ENCODE measurements at regions of chr10 and their contacts with region 1.

Region 1: DNA sequence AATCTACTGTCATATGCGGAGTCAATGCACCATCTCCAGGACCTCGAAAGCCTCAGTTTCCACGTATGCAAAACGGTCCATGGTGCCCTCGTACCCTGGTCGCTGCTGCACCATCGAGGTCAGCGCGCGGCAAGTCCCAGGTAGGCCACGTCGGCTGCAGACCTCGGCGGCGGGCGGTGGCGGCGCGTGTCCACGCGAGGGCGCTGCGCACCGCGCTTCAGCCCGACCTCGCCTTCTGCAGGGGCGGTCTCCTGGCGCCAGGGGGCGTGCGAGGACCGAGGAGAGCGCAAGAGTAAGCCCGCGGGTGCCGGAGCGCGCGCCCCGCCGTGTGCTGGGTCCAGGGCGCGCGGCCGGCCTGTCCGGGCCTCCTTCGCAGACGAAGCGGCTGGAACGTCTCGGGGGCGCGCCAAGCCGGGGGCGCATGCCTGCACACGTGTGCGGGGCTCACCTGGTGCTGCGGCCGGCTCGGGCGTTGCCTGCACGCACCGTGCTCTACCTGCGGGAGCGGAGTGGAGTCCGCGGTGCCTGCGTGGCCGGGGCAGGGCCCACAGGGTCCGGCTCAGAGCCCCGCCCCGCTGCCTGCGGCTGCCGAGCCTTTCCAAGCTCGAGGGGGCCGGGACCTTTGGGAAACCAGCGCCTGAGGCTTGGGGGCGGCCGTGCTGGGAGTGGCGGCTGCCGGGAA is 54.0 kb downstream of the GLRX3 start:
- DNase-seq: peak; percentile 83
- ATAC-seq: peak; percentile 85
- H3K4me3 ChIP-seq: peak overlapping the region; percentile 70
- H3K27ac ChIP-seq: no peak overlapping the region
- H3K4me1 ChIP-seq: no peaks in the 10 kb centered on the region
- H3K27me3 ChIP-seq: no peaks in the 10 kb centered on the region
- CTCF ChIP-seq: peak; percentile 90

Region 2: DNA sequence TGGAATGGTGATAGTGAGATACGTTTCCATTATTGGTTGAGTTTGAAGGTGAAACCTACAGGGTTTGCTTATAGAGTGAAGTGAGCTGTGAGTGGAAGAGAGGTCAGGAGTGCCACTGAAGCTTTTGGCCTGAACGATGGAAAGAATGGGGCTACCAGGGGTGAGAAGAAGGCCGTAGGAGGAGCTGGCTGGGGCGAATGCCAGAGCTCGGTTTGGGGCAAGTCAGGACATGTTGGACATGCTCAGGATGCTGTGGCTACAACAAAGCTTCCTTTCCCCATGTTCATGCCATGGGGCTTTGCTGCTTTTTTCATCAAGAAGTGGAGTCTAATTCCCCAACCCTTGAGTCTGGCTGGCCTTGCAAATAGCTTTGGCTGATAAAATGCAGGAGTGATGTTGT is 199.7 kb after region 1 on chr10:
- CTCF ChIA-PET with region 1: no interaction called
- POLR2A ChIA-PET with region 1: no interaction called
- intact Hi-C with region 1: no loop called
- DNase-seq: no peak
- ATAC-seq: no peak
- H3K4me3 ChIP-seq: no peak overlapping the region
- H3K27ac ChIP-seq: no peak overlapping the region
- H3K4me1 ChIP-seq: no peaks in the 10 kb centered on the region
- H3K27me3 ChIP-seq: no peaks in the 10 kb centered on the region
- CTCF ChIP-seq: no peak

Region 3: GRCh38 chr10:131786756-131787605 is 1596.8 kb after region 1 on chr10:
- CTCF ChIA-PET with region 1: no interaction called
- POLR2A ChIA-PET with region 1: no interaction called
- intact Hi-C with region 1: loop called (anchors 10 kb)
- DNase-seq: peak; percentile 52
- ATAC-seq: no peak
- H3K4me3 ChIP-seq: no peak overlapping the region
- H3K27ac ChIP-seq: no peak overlapping the region
- H3K4me1 ChIP-seq: no peaks in the 10 kb centered on the region
- H3K27me3 ChIP-seq: no peaks in the 10 kb centered on the region
- CTCF ChIP-seq: peak; percentile 80

Region 4: GRCh38 chr10:131874991-131875451 is 1684.8 kb after region 1 on chr10:
- CTCF ChIA-PET with region 1: no interaction called
- POLR2A ChIA-PET with region 1: no interaction called
- intact Hi-C with region 1: loop called (anchors 5 kb)
- DNase-seq: peak; percentile 78
- ATAC-seq: peak; percentile 74
- H3K4me3 ChIP-seq: no peak overlapping the region
- H3K27ac ChIP-seq: no peak overlapping the region
- H3K4me1 ChIP-seq: no peaks in the 10 kb centered on the region
- H3K27me3 ChIP-seq: peaks cover 15% of the 10 kb centered on the region
- CTCF ChIP-seq: peak; percentile 70